ENCODE measurements at regions of chr5 and their contacts with region 1.

Region 1: DNA sequence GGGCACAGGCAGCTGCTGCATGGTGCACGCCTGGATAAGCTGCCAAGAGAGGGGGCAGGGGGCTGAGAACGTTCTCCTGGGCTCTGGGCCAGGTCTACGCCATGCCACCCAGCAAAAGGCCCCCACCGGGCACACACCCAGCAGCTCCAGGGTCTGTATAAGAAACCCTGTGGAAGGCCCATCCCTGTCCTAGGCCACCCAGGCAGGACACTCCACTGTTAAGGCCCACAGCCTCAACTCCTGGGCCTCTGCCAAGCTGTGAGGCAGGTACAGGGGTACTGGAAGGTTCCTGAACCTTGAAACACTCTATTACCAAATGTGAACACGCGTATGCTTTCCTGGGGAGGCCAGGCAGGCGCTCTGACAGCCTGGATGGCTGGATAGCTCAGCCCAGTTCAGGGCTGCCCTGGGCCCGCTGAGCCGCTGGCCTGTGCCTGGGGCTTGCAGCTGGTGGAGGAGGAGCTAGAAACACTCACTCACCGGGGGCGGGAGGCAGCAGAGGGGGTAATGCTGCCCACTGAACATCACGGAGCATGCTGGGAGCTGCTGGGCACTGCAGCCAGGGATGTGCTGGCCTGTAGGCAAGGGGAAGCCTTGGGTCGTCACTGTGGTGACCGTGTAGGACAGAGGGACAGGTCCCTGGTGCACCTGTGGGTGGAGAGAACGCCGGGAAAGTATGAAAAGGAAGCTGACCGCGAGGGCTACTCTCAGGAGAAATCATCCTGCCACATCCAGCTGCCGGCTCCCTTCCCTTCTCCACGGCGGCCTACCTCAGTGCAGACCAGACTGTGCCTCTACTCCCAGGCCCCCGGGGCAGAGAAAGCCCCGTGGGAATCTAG is 6.0 kb downstream of the RNF44 start:
- DNase-seq: peak in 1 of 14 experiments; percentile 31
- ATAC-seq: no peak
- H3K4me3 ChIP-seq: peak overlapping the region; percentile 49
- H3K4me3 Mint-ChIP-seq: peak overlapping the region; percentile 90
- H3K27ac ChIP-seq: peak overlapping the region; percentile 38 to 72
- H3K27ac Mint-ChIP-seq: peak overlapping the region; percentile 92
- H3K4me1 ChIP-seq: peaks cover 76% of the 10 kb centered on the region
- H3K4me1 Mint-ChIP-seq: peaks cover 55% of the 10 kb centered on the region
- H3K27me3 ChIP-seq: no peaks in the 10 kb centered on the region
- H3K27me3 Mint-ChIP-seq: no peaks in the 10 kb centered on the region
- CTCF ChIP-seq: no peak

Region 2: GRCh38 chr5:176543428-176544173 is 12.4 kb after region 1 on chr5:
- CTCF ChIA-PET with region 1: interaction called, 27 read pairs
- POLR2A ChIA-PET with region 1: interaction called, 185 read pairs
- intact Hi-C with region 1: no loop called
- DNase-seq: peak; percentile 53 to 89 (median 70)
- ATAC-seq: peak; percentile 64
- H3K4me3 ChIP-seq: peak overlapping the region; percentile 76
- H3K4me3 Mint-ChIP-seq: peak overlapping the region; percentile 89
- H3K27ac ChIP-seq: peak overlapping the region; percentile 84 to 87
- H3K27ac Mint-ChIP-seq: peak overlapping the region; percentile 93
- H3K4me1 ChIP-seq: peaks cover 77% of the 10 kb centered on the region
- H3K4me1 Mint-ChIP-seq: peaks cover 80% of the 10 kb centered on the region
- H3K27me3 ChIP-seq: no peaks in the 10 kb centered on the region
- H3K27me3 Mint-ChIP-seq: no peaks in the 10 kb centered on the region
- CTCF ChIP-seq: no peak